Activated B cell treated with CpG ODN at 0.5 μM for 24 hours (primary cell): ENCODE measurements at regions of chr3 and their contacts with region 1.

Region 1: DNA sequence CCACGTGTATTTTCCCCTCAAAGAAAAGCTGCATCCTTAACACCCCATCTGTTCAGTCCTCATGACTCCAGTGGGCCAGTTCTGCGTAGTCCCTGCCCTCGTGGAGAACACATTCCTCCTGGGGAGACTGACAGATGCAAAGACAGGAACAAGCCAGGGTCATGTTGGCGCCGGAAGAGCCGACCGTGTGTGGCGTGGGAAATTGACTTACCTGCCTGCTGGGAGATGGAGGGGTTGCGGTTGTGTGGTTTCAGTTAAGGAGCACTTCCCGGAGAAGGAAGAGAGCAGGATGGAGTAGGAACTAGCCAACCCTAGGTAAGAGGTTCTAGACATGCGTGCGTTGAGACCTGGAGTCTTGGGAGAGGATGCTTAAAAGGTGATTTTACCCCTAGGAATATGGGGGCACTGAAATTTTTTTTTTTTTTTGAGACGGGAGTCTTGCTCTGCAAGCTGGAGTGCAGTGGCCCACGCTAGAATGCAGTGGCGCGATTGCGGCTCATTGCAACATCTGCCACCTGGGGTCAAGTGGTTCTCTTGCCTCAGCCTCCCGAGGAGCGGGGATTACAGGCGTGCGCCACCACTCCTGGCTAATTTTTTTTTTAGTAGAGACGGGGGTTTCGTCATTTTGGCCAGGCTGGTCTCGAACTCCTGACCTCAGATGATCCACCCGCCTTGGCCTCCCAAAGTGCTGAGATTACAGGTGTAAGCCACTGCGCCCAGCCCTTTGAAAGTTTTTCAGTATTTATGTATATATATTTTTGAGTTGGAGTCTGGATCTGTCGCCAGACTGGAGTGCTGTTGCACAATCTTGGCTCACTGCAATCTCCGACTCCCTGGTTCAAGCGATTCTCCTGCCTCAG is 1.4 kb downstream of the VHL start:
- DNase-seq: no peak
- ATAC-seq: no peak
- H3K4me3 Mint-ChIP-seq: peak overlapping the region; percentile 97
- H3K27ac Mint-ChIP-seq: peak overlapping the region; percentile 95
- H3K4me1 Mint-ChIP-seq: peaks cover 42% of the 10 kb centered on the region
- H3K27me3 Mint-ChIP-seq: no peaks in the 10 kb centered on the region
- CTCF ChIP-seq: no peak

Region 2: DNA sequence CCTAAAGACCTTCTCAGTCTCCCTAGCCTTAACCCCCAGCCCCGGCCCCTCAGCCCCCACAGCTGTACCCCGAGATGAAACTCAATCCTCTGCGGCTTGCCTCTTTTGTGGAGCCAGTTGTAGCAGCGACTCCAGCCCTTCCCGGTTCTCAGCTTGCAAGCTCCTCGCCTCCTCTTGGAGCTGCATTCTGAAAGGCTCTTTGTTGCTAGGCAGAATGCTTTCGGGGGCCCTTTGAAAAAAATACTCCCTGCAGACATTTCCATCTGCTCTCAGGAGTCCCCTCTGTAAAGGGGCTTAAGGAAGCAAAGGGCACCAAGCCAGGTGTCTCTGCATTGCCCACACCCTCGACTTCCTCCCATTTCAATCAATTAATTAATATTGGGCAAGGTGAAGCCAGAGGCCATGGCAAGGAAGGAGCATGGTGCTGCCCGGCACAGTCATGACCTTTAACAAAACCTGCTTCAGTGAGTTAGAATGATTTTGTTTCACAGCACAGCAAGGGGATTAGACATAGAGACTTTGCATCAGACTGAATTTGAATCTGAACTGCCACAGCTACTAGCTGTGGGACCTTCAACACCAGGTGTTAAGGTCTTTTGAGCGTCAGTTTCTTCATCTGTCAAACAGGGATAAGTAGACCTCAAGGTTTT is 959.0 kb before region 1 on chr3:
- CTCF ChIA-PET with region 1: no interaction called
- POLR2A ChIA-PET with region 1: no interaction called
- intact Hi-C with region 1: no loop called
- DNase-seq: no peak
- ATAC-seq: no peak
- H3K4me3 Mint-ChIP-seq: no peak overlapping the region
- H3K27ac Mint-ChIP-seq: no peak overlapping the region
- H3K4me1 Mint-ChIP-seq: peaks cover 20% of the 10 kb centered on the region
- H3K27me3 Mint-ChIP-seq: peaks cover 2% of the 10 kb centered on the region
- CTCF ChIP-seq: no peak

Region 3: DNA sequence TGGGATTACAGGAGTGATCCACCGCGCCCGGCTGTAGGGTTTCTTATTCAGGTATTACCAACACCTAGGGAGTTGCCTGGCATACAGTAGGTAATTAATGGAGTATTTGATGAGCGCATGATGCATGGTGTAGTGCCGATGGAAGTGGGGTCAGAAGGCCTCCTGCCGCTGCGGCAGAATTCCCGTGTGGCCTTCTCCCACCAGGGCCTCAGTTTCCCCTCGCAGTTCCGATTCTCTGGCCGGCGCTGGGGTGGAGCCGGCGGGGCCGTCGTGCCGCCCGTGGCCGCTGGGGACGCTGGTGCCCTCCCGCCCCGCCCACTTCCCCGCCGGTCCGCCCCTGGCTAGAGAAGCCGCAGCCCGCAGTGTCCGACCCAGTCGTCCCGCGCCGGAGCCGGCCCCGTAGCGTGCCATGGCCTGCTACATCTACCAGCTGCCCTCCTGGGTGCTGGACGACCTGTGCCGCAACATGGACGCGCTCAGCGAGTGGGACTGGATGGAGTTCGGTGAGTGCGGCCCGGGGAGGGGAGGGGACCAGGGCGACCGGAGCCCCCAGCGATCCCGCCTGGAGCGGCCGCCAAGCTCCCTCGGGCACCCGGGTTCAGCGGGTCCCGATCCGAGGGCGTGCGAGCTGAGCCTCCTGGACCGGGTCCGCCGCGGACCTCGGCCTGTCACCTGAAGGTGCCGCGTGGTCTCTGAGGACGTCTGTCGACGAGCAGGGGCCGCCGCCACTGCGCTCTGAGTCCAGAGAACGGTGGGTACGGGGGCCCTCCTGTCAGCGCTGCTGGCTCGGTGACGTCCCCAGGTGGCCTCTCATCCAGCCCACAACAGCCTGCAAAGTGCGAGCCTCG is 21.8 kb after region 1 on chr3 and contains the start of gene IRAK2:
- CTCF ChIA-PET with region 1: no interaction called
- POLR2A ChIA-PET with region 1: interaction called, 15 read pairs
- intact Hi-C with region 1: loop called (anchors 1 kb)
- DNase-seq: peak; percentile 65
- ATAC-seq: peak; percentile 91
- H3K4me3 Mint-ChIP-seq: peak within 1 kb of the TSS; percentile 86
- H3K27ac Mint-ChIP-seq: no peak within 1 kb of the TSS
- H3K4me1 Mint-ChIP-seq: peaks cover 38% of the 10 kb centered on the region
- H3K27me3 Mint-ChIP-seq: no peaks in the 10 kb centered on the region
- CTCF ChIP-seq: peak; percentile 64
- total RNA-seq, gene IRAK2: 8.6 and 8.8 TPM in 2 replicates

Region 4: GRCh38 chr3:10180738-10181295 is 37.9 kb after region 1 on chr3:
- CTCF ChIA-PET with region 1: no interaction called
- POLR2A ChIA-PET with region 1: interaction called, 16 read pairs
- intact Hi-C with region 1: no loop called
- DNase-seq: no peak
- ATAC-seq: no peak
- H3K4me3 Mint-ChIP-seq: peak overlapping the region; percentile 28
- H3K27ac Mint-ChIP-seq: peak overlapping the region; percentile 83
- H3K4me1 Mint-ChIP-seq: peaks cover 38% of the 10 kb centered on the region
- H3K27me3 Mint-ChIP-seq: no peaks in the 10 kb centered on the region
- CTCF ChIP-seq: no peak

Region 5: DNA sequence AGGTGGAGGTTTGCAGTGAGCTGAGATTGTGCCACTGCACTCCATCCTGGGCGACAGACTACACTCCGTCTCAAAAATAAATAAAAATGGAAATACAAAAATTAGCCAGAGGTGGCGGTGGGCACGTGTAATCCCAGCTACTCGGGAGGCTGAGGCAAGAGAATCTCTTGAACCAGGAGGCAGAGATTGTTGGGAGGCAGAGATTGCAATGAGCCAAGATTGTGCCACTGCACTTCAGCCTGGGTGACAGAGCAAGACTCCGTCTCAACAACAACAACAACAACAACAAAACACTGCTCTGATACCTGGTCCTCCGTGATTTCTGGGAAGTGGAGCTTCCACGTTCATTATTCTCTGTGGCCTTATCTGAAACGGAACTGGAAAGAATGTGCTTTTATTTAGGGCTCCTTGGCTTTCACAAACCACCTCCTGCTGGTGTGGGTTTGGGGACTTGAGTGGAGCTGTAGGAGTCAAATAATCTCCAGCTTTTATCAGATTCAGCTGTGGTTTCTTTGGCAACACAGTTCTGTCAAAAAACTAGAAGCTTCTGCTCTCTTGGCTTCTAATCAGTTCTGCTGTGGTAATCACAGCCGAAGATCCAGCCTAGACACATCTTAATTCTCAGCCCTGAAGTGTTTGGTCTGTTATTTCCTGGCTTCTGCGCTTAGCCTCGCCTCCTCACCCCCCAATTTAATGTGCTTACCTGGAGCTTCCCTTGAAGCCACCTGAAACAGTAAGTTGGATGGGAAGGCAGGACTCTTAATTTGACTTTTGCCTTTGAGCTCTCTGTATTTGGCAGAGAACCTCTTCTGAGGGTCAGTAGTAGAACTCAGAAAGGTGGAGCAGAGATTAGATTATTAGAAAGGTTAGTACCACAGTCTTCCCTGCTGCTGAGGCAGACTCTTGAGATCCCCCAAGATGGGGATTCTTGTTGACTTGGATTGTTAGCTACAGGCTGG is 43.1 kb after region 1 on chr3:
- CTCF ChIA-PET with region 1: no interaction called
- POLR2A ChIA-PET with region 1: interaction called, 16 read pairs
- intact Hi-C with region 1: no loop called
- DNase-seq: no peak
- ATAC-seq: no peak
- H3K4me3 Mint-ChIP-seq: no peak overlapping the region
- H3K27ac Mint-ChIP-seq: peak overlapping the region; percentile 63
- H3K4me1 Mint-ChIP-seq: peaks cover 55% of the 10 kb centered on the region
- H3K27me3 Mint-ChIP-seq: no peaks in the 10 kb centered on the region
- CTCF ChIP-seq: no peak

Region 6: DNA sequence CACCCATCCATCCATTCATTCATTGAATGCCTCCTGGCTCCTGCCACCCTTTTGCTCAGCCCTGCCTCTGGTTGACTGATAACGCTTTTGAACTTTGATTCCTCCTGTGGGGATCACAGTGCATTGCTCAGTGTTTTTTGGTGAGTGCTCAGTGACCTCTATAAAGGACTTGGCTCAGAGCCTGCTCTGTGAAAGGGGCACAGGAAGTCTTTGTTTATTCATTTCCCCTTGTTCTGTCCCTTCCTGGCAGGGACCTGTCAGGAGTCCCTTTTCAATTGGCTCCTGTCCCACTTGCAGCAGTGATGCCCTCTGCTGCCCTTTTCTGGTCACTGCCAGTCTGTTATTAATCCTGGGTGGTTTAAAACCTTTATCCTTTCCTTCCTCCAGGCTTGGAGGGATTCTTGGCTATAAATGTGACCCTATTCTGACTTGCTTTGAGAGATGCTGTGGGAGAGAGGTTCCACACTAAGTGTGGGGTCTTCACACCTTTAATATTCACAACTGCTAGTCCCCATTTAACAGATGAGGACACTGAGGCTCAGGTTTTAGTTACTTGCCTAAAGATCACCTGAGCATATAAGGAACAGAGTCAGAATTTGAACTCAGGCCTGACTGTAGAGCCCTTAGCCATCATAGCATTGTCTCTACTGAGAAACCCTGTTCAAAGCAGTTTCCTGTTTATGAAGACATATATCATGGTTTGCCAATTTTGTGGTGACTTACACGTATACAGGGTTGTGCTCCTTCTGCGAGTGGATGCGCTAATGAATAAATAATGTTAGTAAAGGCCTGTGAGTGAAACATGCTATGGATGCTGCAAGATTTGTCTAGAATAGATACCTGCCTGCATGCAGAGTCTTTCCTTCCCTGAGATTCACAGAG is 82.1 kb after region 1 on chr3:
- CTCF ChIA-PET with region 1: interaction called, 4 read pairs
- POLR2A ChIA-PET with region 1: interaction called, 19 read pairs
- intact Hi-C with region 1: loop called (anchors 1 kb)
- DNase-seq: peak; percentile 32
- ATAC-seq: peak; percentile 63
- H3K4me3 Mint-ChIP-seq: peak overlapping the region; percentile 48
- H3K27ac Mint-ChIP-seq: peak overlapping the region; percentile 61
- H3K4me1 Mint-ChIP-seq: peaks cover 65% of the 10 kb centered on the region
- H3K27me3 Mint-ChIP-seq: no peaks in the 10 kb centered on the region
- CTCF ChIP-seq: peak; percentile 85

Region 7: DNA sequence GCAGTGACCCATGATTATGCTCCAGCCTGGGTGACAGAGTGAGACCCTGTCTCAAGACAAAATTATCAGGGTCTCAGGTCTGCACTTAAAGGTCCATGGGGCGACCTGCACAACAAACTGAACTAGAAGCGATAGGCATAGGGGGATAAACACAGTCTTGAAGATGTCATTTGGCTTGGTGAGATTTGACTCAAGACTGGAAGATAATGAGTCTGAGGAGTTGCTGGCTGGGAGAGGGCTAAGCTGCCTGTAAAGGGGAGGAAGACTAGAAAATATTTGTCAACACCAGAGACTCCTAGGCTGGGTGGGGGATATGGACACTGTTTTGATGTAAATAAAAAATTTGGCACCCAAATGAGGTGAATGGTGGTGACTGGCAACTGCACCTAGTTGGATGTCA is 130.0 kb after region 1 on chr3:
- CTCF ChIA-PET with region 1: no interaction called
- POLR2A ChIA-PET with region 1: no interaction called
- intact Hi-C with region 1: no loop called
- DNase-seq: no peak
- ATAC-seq: no peak
- H3K4me3 Mint-ChIP-seq: no peak overlapping the region
- H3K27ac Mint-ChIP-seq: peak overlapping the region; percentile 51
- H3K4me1 Mint-ChIP-seq: peaks cover 30% of the 10 kb centered on the region
- H3K27me3 Mint-ChIP-seq: no peaks in the 10 kb centered on the region
- CTCF ChIP-seq: no peak

Region 8: GRCh38 chr3:10619989-10620832 is 477.3 kb after region 1 on chr3:
- CTCF ChIA-PET with region 1: no interaction called
- POLR2A ChIA-PET with region 1: no interaction called
- intact Hi-C with region 1: no loop called
- DNase-seq: no peak
- ATAC-seq: no peak
- H3K4me3 Mint-ChIP-seq: no peak overlapping the region
- H3K27ac Mint-ChIP-seq: no peak overlapping the region
- H3K4me1 Mint-ChIP-seq: no peaks in the 10 kb centered on the region
- H3K27me3 Mint-ChIP-seq: peaks cover 8% of the 10 kb centered on the region
- CTCF ChIP-seq: no peak